ENCODE measurements at regions of chr19 and their contacts with region 1.

Region 1: GRCh38 chr19:9674663-9675357 is at the start of gene ZNF562:
- DNase-seq: peak; percentile 97
- H3K4me3 ChIP-seq: peak within 1 kb of the TSS; percentile 73 to 92 (median 77)
- H3K27ac ChIP-seq: peak within 1 kb of the TSS; percentile 89 to 95 (median 93)
- H3K4me1 ChIP-seq: peaks cover 12 to 23% (median 13%) of the 10 kb centered on the region in 4 donors
- H3K27me3 ChIP-seq: no peaks in the 10 kb centered on the region
- CTCF ChIP-seq: no peak
- EP300 ChIP-seq: no peak
- POLR2A ChIP-seq: no peak
- total RNA-seq, gene ZNF562: 22.8 to 30.3 (median 27.2) TPM

Region 2: DNA sequence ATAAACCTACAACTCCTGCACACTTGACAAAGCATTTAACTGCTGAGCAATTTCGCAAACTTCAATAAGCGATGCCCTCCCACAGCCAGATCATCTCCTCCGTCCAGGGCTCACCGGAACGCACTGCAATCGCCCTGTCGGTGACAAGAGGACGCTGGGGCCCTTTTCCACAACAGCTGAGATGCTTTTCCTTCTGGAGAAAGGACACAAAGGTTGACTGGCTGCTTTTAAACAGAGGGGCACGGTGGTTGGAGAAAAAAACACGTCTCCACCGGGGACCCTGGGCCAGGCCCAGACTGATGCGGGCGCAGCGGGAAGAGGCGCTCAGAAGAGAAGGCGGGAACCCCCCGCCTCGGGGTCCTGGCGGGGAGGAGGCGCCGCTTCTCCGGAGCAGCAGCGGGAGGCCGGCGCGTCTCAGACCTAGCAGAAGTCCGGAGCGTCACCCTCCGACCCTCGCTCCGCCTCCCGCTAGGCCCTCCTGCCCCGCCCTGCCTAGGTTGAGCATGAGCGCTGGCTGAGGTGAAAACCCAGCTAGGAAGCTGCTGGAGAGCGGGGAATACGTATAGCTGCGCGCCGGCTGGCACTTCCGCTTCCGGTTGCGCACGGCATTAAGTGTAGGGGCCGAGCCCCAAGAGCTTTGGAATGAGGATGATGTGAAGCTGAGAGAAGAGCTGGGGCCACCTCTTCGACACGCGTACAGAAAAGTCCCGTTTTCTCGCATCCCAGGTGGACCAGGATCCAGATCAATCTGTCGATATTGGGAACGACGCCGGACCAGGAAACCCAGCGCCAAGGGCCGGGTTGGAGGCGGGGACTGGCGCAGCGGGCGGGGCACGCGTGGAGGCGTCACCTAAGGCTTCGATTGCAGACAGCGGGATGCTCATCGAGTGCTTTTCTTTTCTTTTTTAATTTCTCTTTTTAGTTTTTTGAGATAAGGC is 93.6 kb after region 1 on chr19 and contains the start of gene ZNF846:
- intact Hi-C with region 1: loop called (anchors 5 kb)
- DNase-seq: peak; percentile 97
- H3K4me3 ChIP-seq: peak within 1 kb of the TSS; percentile 69 to 76 (median 72)
- H3K27ac ChIP-seq: peak within 1 kb of the TSS; percentile 89 to 96 (median 94)
- H3K4me1 ChIP-seq: peaks cover 9 to 25% (median 22%) of the 10 kb centered on the region in 4 donors
- H3K27me3 ChIP-seq: no peaks in the 10 kb centered on the region
- CTCF ChIP-seq: no peak
- EP300 ChIP-seq: no peak
- POLR2A ChIP-seq: no peak
- total RNA-seq, gene ZNF846: 19.7 to 43.2 (median 22.8) TPM

Region 3: DNA sequence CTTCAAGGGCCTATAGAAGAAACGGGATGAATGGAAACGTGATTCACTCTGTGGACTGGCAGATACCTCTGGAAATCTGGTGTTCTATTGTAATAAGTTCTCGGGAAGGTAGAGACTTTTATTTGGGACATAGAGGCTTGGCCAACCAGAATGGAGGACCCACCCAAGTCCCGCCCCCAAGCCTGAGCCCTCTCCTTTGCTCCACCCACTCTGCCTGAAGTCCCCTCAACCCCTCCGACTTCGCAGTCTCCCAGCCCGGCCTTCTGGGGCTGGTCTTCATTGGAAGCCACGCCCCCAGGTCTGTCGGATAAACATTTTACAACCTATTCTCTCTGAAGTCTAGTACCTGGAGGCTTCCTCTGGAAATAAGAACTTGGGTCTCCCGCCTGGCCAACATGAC is 127.2 kb after region 1 on chr19:
- intact Hi-C with region 1: no loop called
- DNase-seq: no peak
- H3K4me3 ChIP-seq: no peak overlapping the region
- H3K27ac ChIP-seq: no peak overlapping the region
- H3K4me1 ChIP-seq: no peaks in the 10 kb centered on the region
- H3K27me3 ChIP-seq: no peaks in the 10 kb centered on the region
- CTCF ChIP-seq: no peak
- EP300 ChIP-seq: no peak
- POLR2A ChIP-seq: no peak

Region 4: DNA sequence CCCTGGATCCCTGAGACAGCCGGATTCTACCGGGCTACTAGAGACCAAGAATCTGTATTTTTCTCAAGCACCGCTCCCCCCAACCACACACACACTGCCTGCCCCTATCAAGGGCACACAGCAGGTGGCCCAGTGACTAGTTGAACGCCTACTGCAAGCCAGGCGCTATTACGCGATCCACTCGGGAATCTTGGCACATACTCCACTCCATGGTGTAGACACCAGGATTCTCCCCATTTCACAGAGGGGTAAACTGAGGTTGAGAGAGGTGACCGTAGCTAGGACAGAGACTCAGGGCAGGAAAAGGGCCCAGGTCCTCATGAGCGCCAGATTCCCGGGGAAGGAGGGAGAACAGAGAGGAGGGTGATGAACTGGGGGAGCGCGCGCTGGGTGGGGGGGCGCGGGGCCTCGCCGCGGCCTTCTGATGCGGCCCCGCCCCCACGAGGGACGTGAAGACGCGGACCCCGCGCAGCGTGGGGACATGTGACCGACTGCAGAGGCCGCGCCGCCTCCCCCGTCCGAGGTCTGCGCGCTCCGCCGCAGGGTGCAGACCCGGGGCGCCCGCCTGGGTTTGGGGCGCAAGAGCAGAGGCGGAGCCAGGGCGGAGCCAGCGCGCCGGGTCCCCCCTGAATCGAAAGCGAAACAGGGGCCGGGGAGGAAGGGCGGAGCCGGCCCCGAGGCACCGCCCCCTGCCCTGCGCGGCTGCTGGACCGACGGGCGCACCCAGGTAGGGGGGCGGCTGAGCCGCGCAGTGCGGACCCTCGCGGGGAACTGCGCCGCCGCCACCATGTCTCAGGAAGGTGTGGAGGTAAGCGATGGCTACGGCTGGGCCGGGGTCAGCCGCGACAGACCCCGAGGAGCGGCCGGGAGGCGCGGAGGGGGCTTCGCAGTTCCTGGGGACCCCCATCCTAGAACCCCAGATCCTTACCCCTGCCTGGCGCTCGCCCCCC is 411.1 kb after region 1 on chr19 and contains the start of gene SHFL:
- intact Hi-C with region 1: no loop called
- DNase-seq: no peak
- H3K4me3 ChIP-seq: peak within 1 kb of the TSS; percentile 86 to 97 (median 92)
- H3K27ac ChIP-seq: peak within 1 kb of the TSS; percentile 87 to 90 (median 90)
- H3K4me1 ChIP-seq: peaks cover 0 to 18% (median 15%) of the 10 kb centered on the region in 4 donors
- H3K27me3 ChIP-seq: no peaks in the 10 kb centered on the region
- CTCF ChIP-seq: no peak
- EP300 ChIP-seq: no peak
- POLR2A ChIP-seq: no peak
- total RNA-seq, gene SHFL: 17.4 to 34.9 (median 26.1) TPM

Measured in esophagus muscularis mucosa (tissue), 4 donors.